ENCODE measurements at regions of chr19 and their contacts with region 1.

Region 1: GRCh38 chr19:35142346-35143230 is 467 bp upstream of the FXYD7 start:
- DNase-seq: no peak

Region 2: DNA sequence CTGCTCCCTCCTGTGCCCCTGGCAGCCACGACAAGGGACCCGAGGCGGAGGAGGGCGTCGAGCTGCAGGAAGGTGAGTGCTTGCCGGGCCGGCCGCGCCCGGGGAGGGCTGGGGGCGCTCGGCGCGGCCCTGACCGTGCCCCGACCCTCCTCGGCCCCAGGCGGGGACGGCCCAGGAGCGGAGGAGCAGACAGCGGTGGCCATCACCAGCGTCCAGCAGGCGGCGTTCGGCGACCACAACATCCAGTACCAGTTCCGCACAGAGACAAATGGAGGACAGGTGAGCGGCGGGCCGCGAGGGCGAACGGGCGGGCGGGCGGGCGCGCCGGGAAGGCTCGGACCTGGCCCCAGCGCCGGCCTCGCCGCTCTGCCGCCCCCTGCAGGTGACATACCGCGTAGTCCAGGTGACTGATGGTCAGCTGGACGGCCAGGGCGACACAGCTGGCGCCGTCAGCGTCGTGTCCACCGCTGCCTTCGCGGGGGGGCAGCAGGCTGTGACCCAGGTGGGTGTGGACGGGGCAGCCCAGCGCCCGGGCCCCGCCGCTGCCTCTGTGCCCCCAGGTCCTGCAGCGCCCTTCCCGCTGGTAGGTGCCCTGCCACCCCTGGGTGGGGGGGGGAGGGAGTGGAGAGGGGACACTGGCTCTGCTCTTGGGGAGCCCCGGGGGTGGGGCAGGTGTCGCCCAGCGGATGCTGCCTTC is 127.0 kb after region 1 on chr19:
- intact Hi-C with region 1: loop called (anchors 2 kb)
- DNase-seq: peak; percentile 95